ENCODE measurements at regions of chr1 and their contacts with region 1.

Region 1: DNA sequence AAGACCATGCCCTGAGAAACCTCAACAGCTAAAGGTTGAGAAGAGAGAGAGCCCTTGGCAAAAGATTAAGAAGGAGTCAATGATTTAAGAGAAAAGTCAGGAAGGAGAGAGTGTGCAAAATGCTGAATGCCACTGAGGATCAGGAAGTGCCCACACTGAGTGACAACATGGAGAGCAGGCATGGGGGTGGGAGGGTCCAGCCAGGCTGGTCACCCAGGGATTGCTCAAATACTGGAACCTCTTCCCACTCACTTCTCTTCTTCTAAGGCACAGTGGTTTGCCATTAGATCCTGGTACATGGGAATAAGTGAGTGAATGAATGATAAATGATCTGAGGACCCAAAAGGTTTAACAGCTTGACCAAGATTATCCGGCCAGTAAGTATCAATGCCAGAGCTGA is 11.1 kb downstream of the PRR9 start:
- DNase-seq: no peak
- H3K4me3 Mint-ChIP-seq: no peak overlapping the region
- H3K27ac Mint-ChIP-seq: no peak overlapping the region
- H3K4me1 Mint-ChIP-seq: peaks cover 9% of the 10 kb centered on the region
- H3K27me3 Mint-ChIP-seq: peaks cover 11% of the 10 kb centered on the region
- CTCF ChIP-seq: no peak

Region 2: GRCh38 chr1:152968248-152968647 is 260.2 kb before region 1 on chr1:
- CTCF ChIA-PET with region 1: no interaction called
- intact Hi-C with region 1: no loop called
- DNase-seq: no peak
- H3K4me3 Mint-ChIP-seq: no peak overlapping the region
- H3K27ac Mint-ChIP-seq: no peak overlapping the region
- H3K4me1 Mint-ChIP-seq: peaks cover 13% of the 10 kb centered on the region
- H3K27me3 Mint-ChIP-seq: no peaks in the 10 kb centered on the region
- CTCF ChIP-seq: no peak

Region 3: GRCh38 chr1:153277817-153278216 is 49.3 kb after region 1 on chr1:
- CTCF ChIA-PET with region 1: no interaction called
- intact Hi-C with region 1: loop called (anchors 5 kb)
- DNase-seq: peak; percentile 75
- H3K4me3 Mint-ChIP-seq: no peak overlapping the region
- H3K27ac Mint-ChIP-seq: no peak overlapping the region
- H3K4me1 Mint-ChIP-seq: no peaks in the 10 kb centered on the region
- H3K27me3 Mint-ChIP-seq: peaks cover 31% of the 10 kb centered on the region
- CTCF ChIP-seq: peak; percentile 86

Region 4: DNA sequence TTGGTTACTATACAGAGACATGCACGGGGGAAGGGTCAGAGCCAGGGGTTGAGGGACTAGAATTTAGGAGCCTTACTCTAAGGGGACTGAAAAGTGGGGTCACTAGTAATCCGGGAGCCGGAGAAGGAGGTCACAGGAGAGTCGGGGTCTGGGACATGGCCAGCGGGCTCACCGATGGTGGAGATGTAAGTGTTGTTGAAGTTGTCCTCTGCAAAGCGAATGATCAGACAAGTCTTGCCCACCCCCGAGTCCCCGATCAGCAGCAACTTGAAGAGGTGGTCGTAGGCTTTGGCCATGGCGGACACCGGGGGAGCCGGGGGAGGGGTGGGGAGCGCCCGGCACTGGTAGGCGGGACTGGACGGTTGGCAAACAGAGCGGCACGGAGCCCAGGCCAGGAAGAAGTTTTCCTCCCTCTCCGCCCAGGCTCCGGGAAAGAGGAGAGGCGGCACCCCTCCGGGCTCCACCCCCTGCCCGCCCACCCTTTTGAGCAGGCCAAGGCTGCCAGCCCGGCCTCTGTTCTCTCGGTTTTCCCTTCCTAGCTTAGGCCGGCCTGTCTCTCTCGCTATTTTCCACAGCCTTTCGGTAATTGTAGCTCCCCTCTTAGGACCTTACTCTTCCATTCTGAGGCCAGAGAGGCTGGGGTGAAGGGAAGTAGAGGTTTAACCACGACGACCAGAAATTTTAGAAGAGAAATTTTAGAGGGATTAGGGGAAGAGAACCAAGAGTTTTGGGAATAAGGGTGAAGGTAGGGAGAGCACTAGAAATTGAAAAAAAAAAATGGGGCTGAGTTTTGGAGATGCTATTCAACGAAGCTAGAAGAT is 757.7 kb after region 1 on chr1 and contains the start of gene RAB13:
- CTCF ChIA-PET with region 1: no interaction called
- intact Hi-C with region 1: no loop called
- DNase-seq: peak; percentile 86
- H3K4me3 Mint-ChIP-seq: peak within 1 kb of the TSS; percentile 84
- H3K27ac Mint-ChIP-seq: peak within 1 kb of the TSS; percentile 67
- H3K4me1 Mint-ChIP-seq: peaks cover 48% of the 10 kb centered on the region
- H3K27me3 Mint-ChIP-seq: peaks cover 12% of the 10 kb centered on the region
- CTCF ChIP-seq: no peak
- total RNA-seq, gene RAB13: 87.5 and 95.0 TPM in 2 replicates

Measured in Calu3 (cell line).